ENCODE measurements at regions of chr3 and their contacts with region 1.

Region 1: GRCh38 chr3:160003520-160004128 is 15.0 kb downstream of the IL12A start:
- DNase-seq: peak; percentile 68
- ATAC-seq: peak; percentile 80
- H3K4me3 Mint-ChIP-seq: no peak overlapping the region
- H3K27ac Mint-ChIP-seq: no peak overlapping the region
- H3K4me1 Mint-ChIP-seq: no peaks in the 10 kb centered on the region
- H3K27me3 Mint-ChIP-seq: no peaks in the 10 kb centered on the region
- CTCF ChIP-seq: peak; percentile 58

Region 2: DNA sequence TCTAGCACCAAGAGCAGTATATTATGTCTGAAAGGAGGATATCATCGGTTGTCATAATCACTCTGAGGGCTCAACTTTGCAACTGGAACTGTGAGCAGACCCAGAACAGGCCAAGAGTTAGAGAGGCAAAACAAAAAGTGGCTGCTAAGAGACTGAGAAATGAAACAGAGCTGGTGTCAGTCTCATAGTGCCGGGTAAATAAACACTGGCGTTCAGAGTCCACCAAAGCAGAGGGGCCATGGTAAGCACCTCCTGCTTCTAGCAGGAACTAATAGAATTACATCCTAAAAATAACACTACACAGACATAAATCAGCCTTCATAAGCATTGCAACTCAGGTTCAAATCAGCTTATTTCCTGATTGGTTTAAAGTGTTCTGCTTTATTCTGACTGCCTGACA is 25.3 kb before region 1 on chr3:
- CTCF ChIA-PET with region 1: interaction called, 10 read pairs
- POLR2A ChIA-PET with region 1: no interaction called
- intact Hi-C with region 1: no loop called
- DNase-seq: no peak
- ATAC-seq: no peak
- H3K4me3 Mint-ChIP-seq: no peak overlapping the region
- H3K27ac Mint-ChIP-seq: no peak overlapping the region
- H3K4me1 Mint-ChIP-seq: no peaks in the 10 kb centered on the region
- H3K27me3 Mint-ChIP-seq: peaks cover 24% of the 10 kb centered on the region
- CTCF ChIP-seq: no peak

Region 3: DNA sequence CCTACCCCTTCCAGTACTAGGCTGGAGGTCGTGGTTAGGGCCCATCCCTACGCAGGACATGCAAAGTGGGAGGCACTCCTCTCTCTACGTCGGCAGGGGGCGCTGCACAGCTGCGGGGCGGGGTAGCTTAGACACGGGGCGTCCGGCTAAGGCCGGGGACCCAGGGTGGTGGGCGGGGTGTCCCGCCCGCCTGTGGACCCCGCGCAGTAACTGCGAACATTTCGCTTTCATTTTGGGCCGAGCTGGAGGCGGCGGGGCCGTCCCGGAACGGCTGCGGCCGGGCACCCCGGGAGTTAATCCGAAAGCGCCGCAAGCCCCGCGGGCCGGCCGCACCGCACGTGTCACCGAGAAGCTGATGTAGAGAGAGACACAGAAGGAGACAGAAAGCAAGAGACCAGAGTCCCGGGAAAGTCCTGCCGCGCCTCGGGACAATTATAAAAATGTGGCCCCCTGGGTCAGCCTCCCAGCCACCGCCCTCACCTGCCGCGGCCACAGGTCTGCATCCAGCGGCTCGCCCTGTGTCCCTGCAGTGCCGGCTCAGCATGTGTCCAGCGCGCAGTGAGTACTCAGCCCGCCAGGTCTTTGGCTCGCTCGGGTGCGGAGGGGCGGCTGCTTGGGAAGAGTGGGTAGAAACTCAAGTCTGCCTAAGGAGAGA is 14.9 kb before region 1 on chr3 and contains the start of gene IL12A:
- CTCF ChIA-PET with region 1: interaction called, 130 read pairs
- POLR2A ChIA-PET with region 1: interaction called, 3 read pairs
- intact Hi-C with region 1: no loop called
- DNase-seq: peak; percentile 88
- ATAC-seq: peak; percentile 95
- H3K4me3 Mint-ChIP-seq: peak within 1 kb of the TSS; percentile 44
- H3K27ac Mint-ChIP-seq: peak within 1 kb of the TSS; percentile 41
- H3K4me1 Mint-ChIP-seq: peaks cover 22% of the 10 kb centered on the region
- H3K27me3 Mint-ChIP-seq: no peaks in the 10 kb centered on the region
- CTCF ChIP-seq: peak; percentile 96
- total RNA-seq, gene IL12A: not detected

Measured in activated CD8-positive, alpha-beta T cell treated with anti-CD3 and anti-CD28 coated beads for 36 hours (primary cell).